ENCODE measurements at regions of chr15 and their contacts with region 1.

Region 1: GRCh38 chr15:44676676-44677075 is 13.2 kb upstream of the SPG11 start:
- DNase-seq: peak; percentile 81
- H3K4me3 Mint-ChIP-seq: peak overlapping the region; percentile 75
- H3K27ac Mint-ChIP-seq: peak overlapping the region; percentile 86
- H3K4me1 Mint-ChIP-seq: peaks cover 64% of the 10 kb centered on the region
- H3K27me3 Mint-ChIP-seq: no peaks in the 10 kb centered on the region

Region 2: GRCh38 chr15:44698641-44699040 is 22.0 kb after region 1 on chr15:
- intact Hi-C with region 1: loop called (anchors 2 kb)
- DNase-seq: no peak
- H3K4me3 Mint-ChIP-seq: no peak overlapping the region
- H3K27ac Mint-ChIP-seq: no peak overlapping the region
- H3K4me1 Mint-ChIP-seq: peaks cover 19% of the 10 kb centered on the region
- H3K27me3 Mint-ChIP-seq: peaks cover 15% of the 10 kb centered on the region

Region 3: GRCh38 chr15:44738340-44738984 is 61.8 kb after region 1 on chr15:
- intact Hi-C with region 1: no loop called
- DNase-seq: peak; percentile 71
- H3K4me3 Mint-ChIP-seq: peak overlapping the region; percentile 66
- H3K27ac Mint-ChIP-seq: peak overlapping the region; percentile 37
- H3K4me1 Mint-ChIP-seq: peaks cover 42% of the 10 kb centered on the region
- H3K27me3 Mint-ChIP-seq: no peaks in the 10 kb centered on the region

Measured in activated CD4-positive, alpha-beta T cell treated with anti-CD3 and anti-CD28 coated beads, Interleukin-2, amount 10 ng/mL, durations not matched to agents 24 days and 14 days (primary cell).